Activated CD4-positive, alpha-beta T cell treated with anti-CD3 and anti-CD28 coated beads, Interleukin-2, amount 10 ng/mL, durations not matched to agents 24 days and 14 days (primary cell): ENCODE measurements at regions of chr12 and their contacts with region 1.

Region 1: GRCh38 chr12:39103552-39104165 is 198.3 kb upstream of the CPNE8 start:
- DNase-seq: peak; percentile 75
- H3K4me3 Mint-ChIP-seq: no peak overlapping the region
- H3K27ac Mint-ChIP-seq: no peak overlapping the region
- H3K4me1 Mint-ChIP-seq: no peaks in the 10 kb centered on the region
- H3K27me3 Mint-ChIP-seq: no peaks in the 10 kb centered on the region

Region 2: DNA sequence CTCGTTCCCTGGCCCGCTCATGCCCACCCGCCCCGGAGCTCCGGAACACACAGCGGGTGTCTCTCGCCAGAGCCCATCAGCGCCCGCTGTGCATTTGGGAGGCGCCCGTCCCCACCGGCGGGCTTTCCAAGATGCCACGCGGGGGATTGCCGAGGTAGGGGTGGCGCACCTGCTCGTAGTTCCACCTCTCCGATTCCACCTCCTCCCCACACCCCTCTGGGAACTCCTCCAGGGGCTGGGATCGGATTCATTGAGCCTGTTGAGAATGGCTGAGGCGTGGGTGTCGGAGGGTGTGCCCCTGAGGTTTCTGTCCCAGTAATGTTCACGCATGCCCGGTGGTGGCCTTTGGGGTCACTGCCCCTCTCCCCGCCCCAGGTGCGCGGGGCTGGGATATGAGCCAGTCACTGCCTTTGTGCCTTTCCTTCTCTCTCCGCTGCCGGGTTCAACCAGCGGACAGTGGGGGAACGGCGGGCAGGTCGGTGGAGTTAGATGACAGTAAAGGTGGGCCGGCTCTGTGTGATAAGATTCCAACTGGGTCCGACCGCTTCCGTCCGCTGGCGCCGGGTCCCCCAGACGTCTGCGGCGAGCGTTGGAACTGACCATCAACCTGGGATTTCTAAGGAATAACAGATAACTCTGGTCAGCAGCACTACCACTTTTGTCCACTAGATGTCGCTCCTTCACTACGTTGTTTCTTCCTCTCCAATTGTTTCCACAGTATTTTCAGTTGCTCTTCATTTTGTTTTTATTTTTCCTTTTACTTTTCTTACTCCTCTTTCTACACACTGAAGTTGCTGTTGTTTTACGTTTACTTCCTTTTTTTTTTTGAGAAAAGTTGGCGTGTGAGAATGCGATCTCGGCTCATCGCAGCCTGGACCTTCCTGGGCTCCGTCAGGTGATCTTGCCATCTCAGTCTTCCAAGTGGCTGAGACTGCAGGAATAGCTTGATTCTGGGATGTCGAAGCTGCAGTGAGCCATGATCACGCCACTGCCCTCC is 965.1 kb before region 1 on chr12:
- intact Hi-C with region 1: loop called (anchors 5 kb)
- DNase-seq: peak; percentile 89
- H3K4me3 Mint-ChIP-seq: peak overlapping the region; percentile 87
- H3K27ac Mint-ChIP-seq: peak overlapping the region; percentile 39
- H3K4me1 Mint-ChIP-seq: peaks cover 10% of the 10 kb centered on the region
- H3K27me3 Mint-ChIP-seq: no peaks in the 10 kb centered on the region

Region 3: GRCh38 chr12:38332814-38333213 is 770.8 kb before region 1 on chr12:
- intact Hi-C with region 1: loop called (anchors 1 kb)
- DNase-seq: no peak
- H3K4me3 Mint-ChIP-seq: no peak overlapping the region
- H3K27ac Mint-ChIP-seq: no peak overlapping the region
- H3K4me1 Mint-ChIP-seq: no peaks in the 10 kb centered on the region
- H3K27me3 Mint-ChIP-seq: no peaks in the 10 kb centered on the region

Region 4: GRCh38 chr12:38664661-38665269 is 438.9 kb before region 1 on chr12:
- intact Hi-C with region 1: loop called (anchors 5 kb)
- DNase-seq: no peak
- H3K4me3 Mint-ChIP-seq: no peak overlapping the region
- H3K27ac Mint-ChIP-seq: no peak overlapping the region
- H3K4me1 Mint-ChIP-seq: no peaks in the 10 kb centered on the region
- H3K27me3 Mint-ChIP-seq: no peaks in the 10 kb centered on the region

Region 5: GRCh38 chr12:38921025-38921677 is 182.5 kb before region 1 on chr12:
- intact Hi-C with region 1: loop called (anchors 1 kb)
- DNase-seq: peak; percentile 76
- H3K4me3 Mint-ChIP-seq: no peak overlapping the region
- H3K27ac Mint-ChIP-seq: no peak overlapping the region
- H3K4me1 Mint-ChIP-seq: no peaks in the 10 kb centered on the region
- H3K27me3 Mint-ChIP-seq: peaks cover 4% of the 10 kb centered on the region

Region 6: GRCh38 chr12:39070775-39071174 is 32.9 kb before region 1 on chr12:
- intact Hi-C with region 1: no loop called
- DNase-seq: no peak
- H3K4me3 Mint-ChIP-seq: no peak overlapping the region
- H3K27ac Mint-ChIP-seq: no peak overlapping the region
- H3K4me1 Mint-ChIP-seq: no peaks in the 10 kb centered on the region
- H3K27me3 Mint-ChIP-seq: no peaks in the 10 kb centered on the region